GM18951 (cell line): ENCODE measurements at regions of chr12 and their contacts with region 1.

Region 1: GRCh38 chr12:47021298-47021697 is 58.1 kb upstream of the PCED1B start:
- POLR2A ChIP-seq: no peak

Region 2: DNA sequence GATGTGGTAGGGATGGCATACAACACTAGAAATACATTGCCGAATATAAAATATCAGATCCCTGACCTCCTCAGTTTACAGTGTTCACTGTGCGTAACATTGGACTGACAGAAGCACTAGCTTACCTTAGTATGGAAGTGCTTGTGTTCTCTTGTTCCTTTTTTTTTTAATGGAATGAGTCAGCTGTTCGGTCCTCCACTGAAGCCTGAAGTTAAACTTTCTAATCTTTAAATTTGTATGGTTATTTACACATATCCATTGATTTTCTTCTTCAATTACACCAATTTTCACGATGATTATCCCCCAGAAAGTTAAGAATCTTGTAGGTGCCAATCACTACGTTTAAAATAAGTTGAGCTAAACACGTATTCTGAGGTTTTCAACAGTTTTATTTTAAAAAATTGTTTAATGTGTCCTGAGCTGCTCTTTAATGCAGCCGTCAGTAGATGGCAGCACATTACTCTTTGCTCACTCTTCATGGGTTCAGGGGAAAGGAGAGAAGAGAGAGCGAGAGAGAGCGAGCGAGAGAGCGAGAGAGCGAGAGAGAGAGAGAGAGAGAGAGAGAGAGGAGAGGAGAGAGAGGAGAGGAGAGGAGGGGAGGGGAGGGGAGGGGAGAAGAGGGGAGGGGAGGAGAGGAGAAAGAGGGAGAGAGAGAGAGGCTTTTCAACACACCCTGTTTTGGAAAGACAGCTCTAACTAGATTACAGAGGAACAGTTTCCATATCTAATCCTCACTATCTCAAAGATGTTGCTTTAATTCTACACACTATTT is 896.3 kb before region 1 on chr12:
- in situ Hi-C with region 1: loop called (anchors 25 kb)
- POLR2A ChIP-seq: no peak

Region 3: GRCh38 chr12:46342562-46343033 is 678.7 kb before region 1 on chr12:
- in situ Hi-C with region 1: loop called (anchors 25 kb)
- POLR2A ChIP-seq: no peak

Region 4: GRCh38 chr12:46608431-46609272 is 412.6 kb before region 1 on chr12:
- in situ Hi-C with region 1: no loop called
- POLR2A ChIP-seq: no peak

Region 5: DNA sequence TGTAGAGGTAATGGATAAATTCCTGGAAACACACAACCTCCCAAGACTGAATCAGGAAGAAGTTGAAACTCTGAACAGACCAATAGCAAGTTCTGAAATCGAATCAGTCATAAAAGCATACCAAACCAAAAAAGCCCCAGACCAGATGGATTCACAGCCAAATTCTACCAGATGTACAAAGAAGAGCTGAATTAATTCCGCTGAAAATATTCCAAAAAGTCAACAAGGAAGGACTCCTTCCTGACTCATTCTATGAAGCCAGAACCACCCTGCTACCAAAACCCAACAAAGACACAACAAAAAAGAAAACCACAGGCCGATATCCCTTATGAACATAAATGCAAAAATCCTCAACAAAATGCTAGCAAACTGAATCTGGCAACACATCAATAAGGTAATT is 277.0 kb before region 1 on chr12:
- in situ Hi-C with region 1: no loop called
- POLR2A ChIP-seq: no peak

Region 6: DNA sequence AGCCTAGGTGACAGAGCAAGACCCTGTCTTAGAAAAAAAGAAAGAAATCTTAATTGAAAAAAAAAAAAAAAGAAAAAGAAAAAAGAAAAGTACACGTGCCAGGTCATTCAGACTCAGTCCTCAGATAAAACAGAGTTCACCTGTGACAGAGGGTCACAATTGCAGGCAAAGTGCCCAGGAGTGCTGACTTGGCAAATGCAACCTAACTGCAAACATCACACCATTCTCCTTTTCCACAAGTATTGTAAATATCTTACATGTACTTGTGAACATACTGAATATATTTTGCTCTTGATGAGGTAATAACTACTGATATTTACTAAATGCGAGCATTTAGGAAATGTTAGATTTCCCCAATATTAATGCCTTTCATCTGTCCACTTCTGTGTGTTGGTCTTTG is 992.0 kb after region 1 on chr12:
- in situ Hi-C with region 1: no loop called
- POLR2A ChIP-seq: no peak